ENCODE measurements at regions of chr5 and their contacts with region 1.

Region 1: GRCh38 chr5:87780831-87781760 is 368.4 kb upstream of the CCNH start:
- DNase-seq: peak; percentile 92
- H3K4me3 Mint-ChIP-seq: no peak overlapping the region
- H3K27ac Mint-ChIP-seq: no peak overlapping the region
- H3K4me1 Mint-ChIP-seq: peaks cover 2% of the 10 kb centered on the region
- H3K27me3 Mint-ChIP-seq: peaks cover 12% of the 10 kb centered on the region

Region 2: DNA sequence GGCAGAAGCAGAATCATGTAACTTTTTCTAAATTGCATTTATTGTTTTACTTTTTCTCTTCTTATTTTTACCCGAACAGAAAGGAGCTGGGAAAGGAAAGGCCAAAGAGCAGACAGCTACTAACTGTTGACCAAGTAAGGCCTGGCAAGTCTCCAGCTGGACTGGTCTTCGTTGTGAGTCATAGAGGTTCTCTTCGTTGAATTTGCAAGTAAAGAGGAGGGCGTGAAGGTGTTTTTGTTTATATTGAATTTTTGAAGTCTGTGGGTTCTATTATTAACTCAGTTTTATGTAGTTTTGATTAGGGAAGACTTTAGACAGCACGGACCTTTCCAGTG is 48.1 kb after region 1 on chr5:
- intact Hi-C with region 1: no loop called
- DNase-seq: no peak
- H3K4me3 Mint-ChIP-seq: no peak overlapping the region
- H3K27ac Mint-ChIP-seq: no peak overlapping the region
- H3K4me1 Mint-ChIP-seq: no peaks in the 10 kb centered on the region
- H3K27me3 Mint-ChIP-seq: no peaks in the 10 kb centered on the region

Region 3: GRCh38 chr5:88602584-88602983 is 821.5 kb after region 1 on chr5:
- intact Hi-C with region 1: loop called (anchors 2 kb)
- DNase-seq: peak; percentile 79
- H3K4me3 Mint-ChIP-seq: no peak overlapping the region
- H3K27ac Mint-ChIP-seq: no peak overlapping the region
- H3K4me1 Mint-ChIP-seq: no peaks in the 10 kb centered on the region
- H3K27me3 Mint-ChIP-seq: no peaks in the 10 kb centered on the region

Region 4: DNA sequence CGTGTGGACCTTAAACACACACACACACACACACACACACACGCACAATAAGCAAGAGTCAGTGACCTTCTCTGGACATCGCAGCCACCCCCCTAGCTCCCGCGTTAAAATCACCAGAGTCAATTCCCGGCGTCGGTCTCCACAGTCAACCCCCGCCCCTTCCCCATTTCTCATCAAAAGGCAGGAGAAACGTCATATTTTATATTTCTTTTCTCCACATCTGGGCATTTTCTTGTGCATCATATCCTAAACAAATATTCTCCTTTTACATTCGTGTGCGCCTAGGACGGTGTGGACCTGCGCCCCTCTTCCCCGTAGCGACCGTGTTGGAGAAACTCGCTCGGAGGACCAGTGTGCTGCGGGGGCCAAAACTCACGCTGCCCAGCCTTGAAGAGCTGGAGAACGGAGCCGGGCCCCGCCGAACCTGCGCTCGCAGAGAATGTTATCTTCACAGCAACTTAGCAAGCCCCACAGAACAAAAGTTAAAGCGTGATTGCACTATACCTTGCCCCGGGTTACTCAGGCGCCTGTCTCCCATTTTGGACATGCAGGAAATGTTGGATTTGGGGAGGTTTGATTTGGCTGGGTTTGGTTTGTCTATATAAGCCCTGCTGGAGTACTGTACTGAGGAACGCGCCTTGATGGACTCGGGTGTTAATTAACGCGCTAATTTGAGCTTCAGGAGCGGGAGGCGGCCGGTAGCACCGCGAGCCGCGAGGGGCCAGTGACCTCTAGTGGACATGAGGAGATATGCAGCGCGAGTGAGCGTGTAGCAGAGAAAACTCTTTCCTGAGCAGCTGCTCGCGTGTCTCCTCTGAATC is 909.5 kb after region 1 on chr5:
- intact Hi-C with region 1: loop called (anchors 1 kb)
- DNase-seq: peak; percentile 89
- H3K4me3 Mint-ChIP-seq: peak overlapping the region; percentile 43
- H3K27ac Mint-ChIP-seq: peak overlapping the region; percentile 88
- H3K4me1 Mint-ChIP-seq: peaks cover 7% of the 10 kb centered on the region
- H3K27me3 Mint-ChIP-seq: peaks cover 91% of the 10 kb centered on the region

Measured in activated CD4-positive, alpha-beta T cell treated with anti-CD3 and anti-CD28 coated beads, Interleukin-2, amount 10 ng/mL, durations not matched to agents 24 days and 14 days (primary cell).